ENCODE measurements at regions of chr14 and their contacts with region 1.

Region 1: GRCh38 chr14:105490572-105491366 is at the start of gene TEDC1:
- DNase-seq: peak; percentile 100
- ATAC-seq: peak; percentile 88 to 90 (median 89)
- H3K4me3 ChIP-seq: peak within 1 kb of the TSS; percentile 75
- H3K27ac ChIP-seq: peak within 1 kb of the TSS; percentile 83
- H3K4me1 ChIP-seq: peaks cover 13% of the 10 kb centered on the region
- H3K27me3 ChIP-seq: peaks cover 0 to 17% (median 0%) of the 10 kb centered on the region in 3 donors
- CTCF ChIP-seq: peak; percentile 86
- total RNA-seq, gene TEDC1: 0.95 to 2.0 (median 1.2) TPM

Region 2: GRCh38 chr14:104689109-104689880 is 801.5 kb before region 1 on chr14 and contains the start of gene INF2:
- intact Hi-C with region 1: loop called in 1 of 2 experiments (anchors 10 kb)
- DNase-seq: peak; percentile 70 to 76
- ATAC-seq: peak; percentile 63 to 76 (median 68)
- H3K4me3 ChIP-seq: peak within 1 kb of the TSS; percentile 91
- H3K27ac ChIP-seq: peak within 1 kb of the TSS; percentile 94
- H3K4me1 ChIP-seq: peaks cover 40% of the 10 kb centered on the region
- H3K27me3 ChIP-seq: no peaks in the 10 kb centered on the region
- CTCF ChIP-seq: no peak
- total RNA-seq, gene INF2: 16.4 to 26.3 (median 23.4) TPM

Region 3: GRCh38 chr14:105369653-105370040 is 121.1 kb before region 1 on chr14:
- intact Hi-C with region 1: loop called (anchors 1 to 2 kb)
- DNase-seq: no peak
- ATAC-seq: no peak
- H3K4me3 ChIP-seq: no peak overlapping the region
- H3K27ac ChIP-seq: no peak overlapping the region
- H3K4me1 ChIP-seq: no peaks in the 10 kb centered on the region
- H3K27me3 ChIP-seq: no peaks in the 10 kb centered on the region
- CTCF ChIP-seq: no peak

Region 4: GRCh38 chr14:105375635-105376057 is 115.1 kb before region 1 on chr14:
- intact Hi-C with region 1: loop called (anchors 1 to 2 kb)
- DNase-seq: no peak
- ATAC-seq: no peak
- H3K4me3 ChIP-seq: no peak overlapping the region
- H3K27ac ChIP-seq: no peak overlapping the region
- H3K4me1 ChIP-seq: no peaks in the 10 kb centered on the region
- H3K27me3 ChIP-seq: no peaks in the 10 kb centered on the region
- CTCF ChIP-seq: no peak

Region 5: GRCh38 chr14:105448706-105449111 is 42.1 kb before region 1 on chr14:
- intact Hi-C with region 1: loop called in 1 of 2 experiments (anchors 5 kb)
- DNase-seq: peak; percentile 76 to 88
- ATAC-seq: peak; percentile 83 to 94 (median 88)
- H3K4me3 ChIP-seq: peak overlapping the region; percentile 2
- H3K27ac ChIP-seq: no peak overlapping the region
- H3K4me1 ChIP-seq: peaks cover 6% of the 10 kb centered on the region
- H3K27me3 ChIP-seq: no peaks in the 10 kb centered on the region
- CTCF ChIP-seq: peak; percentile 94

Region 6: DNA sequence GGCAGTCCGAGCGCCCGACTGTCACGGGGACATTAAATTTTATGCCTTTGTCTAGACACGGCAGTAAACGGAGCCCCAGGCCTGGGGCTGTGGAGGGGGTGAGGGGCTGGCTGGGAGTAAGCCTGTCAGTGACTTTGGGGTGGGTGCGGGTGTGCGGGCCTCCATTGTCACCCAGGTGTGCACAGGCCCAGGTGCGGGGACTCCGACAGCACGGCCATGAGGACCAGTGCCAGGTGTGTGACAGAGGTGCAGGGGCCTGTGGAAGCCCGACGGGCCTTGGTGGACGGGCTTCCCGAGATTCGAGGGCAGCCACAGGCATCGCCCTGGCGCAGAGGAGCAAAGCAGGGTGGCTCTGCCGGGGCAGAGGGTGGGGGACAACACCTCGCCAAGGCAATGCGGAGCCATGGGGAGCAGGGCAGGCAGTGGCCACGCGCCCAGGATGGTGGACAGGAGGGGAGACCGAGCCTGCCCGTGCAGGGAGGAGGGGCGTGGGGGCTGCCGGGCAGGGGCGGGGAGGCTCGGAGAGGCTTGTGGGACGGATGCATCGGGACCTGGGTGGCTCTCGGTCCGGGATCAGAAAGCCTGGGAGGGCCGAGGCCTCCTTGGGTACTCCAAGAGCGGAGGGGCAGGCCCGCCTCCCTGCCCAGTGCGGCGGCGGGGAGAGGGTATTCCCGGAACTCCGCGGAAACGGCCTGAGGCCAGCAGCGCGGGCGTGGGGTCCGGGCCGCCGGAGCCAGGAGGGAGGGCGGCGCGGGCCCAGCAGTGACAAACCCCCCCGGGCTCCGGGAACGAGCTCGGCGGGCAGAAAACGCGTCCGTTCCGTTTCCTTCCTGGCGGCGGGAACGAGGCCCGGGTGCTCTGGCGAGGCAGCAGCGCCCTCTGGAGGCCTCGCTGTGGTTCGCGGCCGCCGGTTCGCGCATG is 37.2 kb after region 1 on chr14:
- intact Hi-C with region 1: loop called in 1 of 2 experiments (anchors 5 kb)
- DNase-seq: peak; percentile 82 to 88
- ATAC-seq: peak; percentile 80 to 95 (median 89)
- H3K4me3 ChIP-seq: peak overlapping the region; percentile 77
- H3K27ac ChIP-seq: no peak overlapping the region
- H3K4me1 ChIP-seq: peaks cover 17% of the 10 kb centered on the region
- H3K27me3 ChIP-seq: peaks cover 0 to 46% (median 12%) of the 10 kb centered on the region in 3 donors
- CTCF ChIP-seq: peak; percentile 90

Region 7: DNA sequence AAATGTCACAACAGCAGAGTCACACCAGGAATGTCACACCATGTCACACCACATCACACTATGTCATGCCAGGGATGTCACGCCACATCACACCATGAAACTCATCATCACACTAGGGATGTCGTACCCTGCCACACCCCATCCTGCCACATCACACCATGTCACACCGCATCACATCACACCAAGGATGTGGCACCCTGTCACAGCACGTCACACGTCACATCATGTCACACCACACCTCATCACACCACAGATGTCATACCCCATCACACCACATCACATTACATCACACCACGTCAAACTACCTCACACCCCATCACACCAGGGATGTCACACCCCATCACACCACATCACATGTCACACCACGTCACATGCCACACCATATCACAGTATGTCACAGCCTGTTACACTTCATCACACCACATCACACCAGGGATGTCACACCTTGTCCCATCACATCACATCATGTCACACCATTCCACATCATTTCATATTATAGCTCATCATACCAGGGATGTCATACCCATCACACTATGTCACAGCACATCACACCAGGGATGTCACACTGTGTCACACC is 126.5 kb after region 1 on chr14:
- intact Hi-C with region 1: no loop called
- DNase-seq: no peak
- ATAC-seq: peak in 1 of 4 donors; percentile 40
- H3K4me3 ChIP-seq: no peak overlapping the region
- H3K27ac ChIP-seq: no peak overlapping the region
- H3K4me1 ChIP-seq: no peaks in the 10 kb centered on the region
- H3K27me3 ChIP-seq: no peaks in the 10 kb centered on the region
- CTCF ChIP-seq: no peak

Measured in psoas muscle (tissue), 8 donors.